Posterior vena cava (tissue), 2 donors: ENCODE measurements at regions of chr1 and their contacts with region 1.

Region 1: DNA sequence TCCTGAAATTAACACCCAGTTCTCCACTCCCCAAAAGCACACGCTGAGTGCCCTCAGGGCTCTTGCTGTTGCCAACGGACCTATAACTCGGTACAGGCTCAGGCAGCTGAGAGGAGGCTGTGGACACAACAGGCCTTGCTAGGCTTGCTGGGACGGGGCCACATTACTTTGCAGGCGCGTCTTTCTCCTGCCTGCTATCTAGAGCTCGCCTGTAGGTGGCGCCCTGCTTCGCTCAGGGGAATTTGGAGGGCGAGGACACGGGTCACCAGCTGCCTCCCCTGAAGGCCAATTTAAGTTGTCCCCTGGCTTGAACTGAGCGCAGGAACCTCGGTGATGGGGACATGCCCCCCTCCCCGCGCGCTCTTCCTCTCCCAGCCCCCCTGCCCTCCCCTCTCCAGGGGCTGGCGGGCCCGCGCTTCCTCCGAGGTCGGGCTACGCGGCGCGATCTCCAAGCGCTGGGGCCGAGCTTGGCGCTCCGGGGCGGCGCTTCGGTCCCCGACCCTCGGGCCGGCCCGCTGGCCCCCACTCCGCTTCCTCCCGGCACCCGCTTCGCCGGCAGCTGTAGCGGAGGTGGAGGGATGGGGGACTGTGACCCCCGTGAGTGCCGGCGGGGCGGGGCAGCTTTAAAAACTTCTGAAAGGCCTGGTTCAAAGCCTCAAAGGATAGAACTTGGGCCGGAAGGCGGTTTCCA is 32.4 kb upstream of the NFIA start:
- DNase-seq: peak; percentile 98

Region 2: GRCh38 chr1:60825593-60825992 is 224.4 kb before region 1 on chr1:
- intact Hi-C with region 1: no loop called
- DNase-seq: no peak

Region 3: GRCh38 chr1:61079898-61080336 is 29.9 kb after region 1 on chr1:
- intact Hi-C with region 1: loop called in 1 of 2 experiments (anchors 5 kb)
- DNase-seq: peak; percentile 91

Region 4: DNA sequence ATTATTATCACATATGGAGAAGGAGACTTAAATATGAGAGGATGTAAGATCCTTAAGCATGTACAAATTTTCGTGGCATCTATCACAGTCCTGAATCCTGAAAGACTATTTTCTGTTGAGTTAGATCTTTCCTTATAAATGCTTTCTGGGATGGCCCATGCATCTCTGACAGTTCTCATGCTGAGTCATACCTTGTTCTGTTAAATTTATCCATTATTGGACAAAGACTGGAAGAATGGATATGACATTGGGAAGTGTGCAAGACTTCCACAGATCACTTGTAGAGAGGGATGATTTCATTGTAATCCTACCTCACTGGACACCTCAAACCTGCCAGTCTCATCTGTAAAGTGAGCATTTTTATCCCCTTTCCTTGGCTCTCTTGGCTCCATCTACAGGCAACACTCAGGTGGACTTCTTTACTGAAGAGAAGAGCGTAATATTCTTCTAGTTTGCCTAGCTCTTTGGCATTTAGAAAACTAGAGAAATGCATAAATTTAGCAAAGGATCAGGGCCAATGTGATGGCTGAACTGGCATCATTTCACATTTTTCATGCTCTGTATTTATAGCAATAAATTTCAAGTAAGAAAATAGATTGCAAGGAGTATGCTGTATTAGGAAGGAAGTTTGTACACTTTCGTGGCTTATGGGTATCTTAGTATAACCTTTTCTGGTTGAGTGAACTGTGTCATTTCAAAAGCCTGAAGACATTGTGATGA is 160.6 kb after region 1 on chr1:
- intact Hi-C with region 1: loop called in 1 of 2 experiments (anchors 10 kb)
- DNase-seq: no peak

Region 5: DNA sequence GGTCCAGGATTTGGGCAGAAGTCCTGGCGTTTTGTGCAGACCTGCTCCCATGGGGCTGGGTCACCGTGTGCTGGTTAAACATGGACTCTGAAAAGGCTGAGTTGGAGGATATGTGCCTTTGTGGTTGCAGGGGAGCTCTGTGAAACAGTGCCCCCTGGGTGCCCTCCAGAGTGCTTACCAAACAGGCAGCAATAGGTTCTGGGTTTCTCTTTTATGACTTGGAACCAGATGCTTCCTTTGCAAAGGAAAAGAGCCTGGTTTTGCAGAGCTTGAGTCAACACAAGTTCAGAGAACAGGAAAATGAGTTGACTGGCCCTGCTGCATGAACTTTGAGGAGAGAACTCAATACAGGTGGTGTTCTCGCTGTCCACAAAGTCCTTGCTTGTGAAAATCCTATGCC is 386.0 kb after region 1 on chr1:
- intact Hi-C with region 1: loop called in 1 of 2 experiments (anchors 5 kb)
- DNase-seq: no peak

Region 6: DNA sequence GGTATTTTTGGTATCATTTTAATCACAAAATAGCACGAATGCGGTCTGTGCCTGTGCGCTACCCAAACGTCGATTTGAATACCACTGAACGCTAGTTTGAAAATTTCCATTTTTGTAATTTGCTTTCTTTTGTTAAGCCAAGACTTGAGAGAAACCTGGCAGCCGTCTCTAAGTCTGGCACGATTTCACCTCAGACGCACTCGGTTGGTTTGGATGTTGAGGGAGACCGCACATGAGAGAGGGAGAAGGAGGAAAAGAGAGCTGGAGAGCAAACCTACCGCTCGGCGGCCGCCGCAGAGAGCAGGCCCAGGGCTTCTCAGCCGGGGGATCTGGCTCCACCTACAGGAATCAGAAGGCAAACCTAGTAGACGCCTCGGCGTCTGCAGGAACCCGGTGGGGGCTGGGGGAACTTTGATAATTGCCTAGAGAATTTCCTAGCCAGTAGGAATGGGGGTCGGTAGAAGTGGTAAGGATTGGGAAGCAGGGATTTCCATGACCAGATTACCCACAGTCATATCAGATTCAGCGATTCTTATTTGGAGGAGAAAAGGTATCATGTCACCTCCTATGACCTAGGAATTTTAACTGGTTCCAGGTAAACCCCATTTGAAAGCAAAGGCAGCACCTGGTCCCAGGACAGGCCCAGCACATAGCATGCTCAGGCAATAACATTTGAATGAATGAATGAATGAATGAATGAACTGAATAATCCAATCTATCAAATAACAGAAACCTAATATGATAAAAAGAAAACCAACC is 591.8 kb after region 1 on chr1:
- intact Hi-C with region 1: loop called in 1 of 2 experiments (anchors 10 kb)
- DNase-seq: peak; percentile 94